ENCODE measurements at regions of chr7 and their contacts with region 1.

Region 1: GRCh38 chr7:2555121-2556052 is at the start of gene BRAT1:
- DNase-seq: peak; percentile 90 to 98 (median 96)
- ATAC-seq: peak; percentile 93
- H3K4me3 ChIP-seq: peak within 1 kb of the TSS; percentile 93
- H3K4me3 Mint-ChIP-seq: peak within 1 kb of the TSS; percentile 86
- H3K27ac ChIP-seq: peak within 1 kb of the TSS; percentile 98 to 99
- H3K27ac Mint-ChIP-seq: peak within 1 kb of the TSS; percentile 90
- H3K4me1 ChIP-seq: peaks cover 37% of the 10 kb centered on the region
- H3K4me1 Mint-ChIP-seq: peaks cover 47% of the 10 kb centered on the region
- H3K27me3 ChIP-seq: no peaks in the 10 kb centered on the region
- H3K27me3 Mint-ChIP-seq: no peaks in the 10 kb centered on the region
- CTCF ChIP-seq: peak; percentile 24
- total RNA-seq, gene BRAT1: 18.9 to 20.6 TPM

Region 2: GRCh38 chr7:1646957-1647891 is 908.2 kb before region 1 on chr7:
- CTCF ChIA-PET with region 1: no interaction called
- POLR2A ChIA-PET with region 1: no interaction called
- intact Hi-C with region 1: no loop called
- DNase-seq: no peak
- ATAC-seq: no peak
- H3K4me3 ChIP-seq: no peak overlapping the region
- H3K4me3 Mint-ChIP-seq: no peak overlapping the region
- H3K27ac ChIP-seq: no peak overlapping the region
- H3K27ac Mint-ChIP-seq: no peak overlapping the region
- H3K4me1 ChIP-seq: no peaks in the 10 kb centered on the region
- H3K4me1 Mint-ChIP-seq: no peaks in the 10 kb centered on the region
- H3K27me3 ChIP-seq: no peaks in the 10 kb centered on the region
- H3K27me3 Mint-ChIP-seq: peaks cover 21% of the 10 kb centered on the region
- CTCF ChIP-seq: no peak

Region 3: GRCh38 chr7:2403014-2403717 is 152.2 kb before region 1 on chr7 and contains the start of gene CHST12:
- CTCF ChIA-PET with region 1: no interaction called
- POLR2A ChIA-PET with region 1: no interaction called
- intact Hi-C with region 1: loop called (anchors 1 kb)
- DNase-seq: peak; percentile 87 to 99 (median 94)
- ATAC-seq: peak; percentile 78
- H3K4me3 ChIP-seq: peak within 1 kb of the TSS; percentile 84
- H3K4me3 Mint-ChIP-seq: peak within 1 kb of the TSS; percentile 84
- H3K27ac ChIP-seq: peak within 1 kb of the TSS; percentile 49 to 66
- H3K27ac Mint-ChIP-seq: peak within 1 kb of the TSS; percentile 88
- H3K4me1 ChIP-seq: peaks cover 53% of the 10 kb centered on the region
- H3K4me1 Mint-ChIP-seq: peaks cover 50% of the 10 kb centered on the region
- H3K27me3 ChIP-seq: no peaks in the 10 kb centered on the region
- H3K27me3 Mint-ChIP-seq: no peaks in the 10 kb centered on the region
- CTCF ChIP-seq: no peak
- total RNA-seq, gene CHST12: 10.3 to 11.7 TPM

Region 4: DNA sequence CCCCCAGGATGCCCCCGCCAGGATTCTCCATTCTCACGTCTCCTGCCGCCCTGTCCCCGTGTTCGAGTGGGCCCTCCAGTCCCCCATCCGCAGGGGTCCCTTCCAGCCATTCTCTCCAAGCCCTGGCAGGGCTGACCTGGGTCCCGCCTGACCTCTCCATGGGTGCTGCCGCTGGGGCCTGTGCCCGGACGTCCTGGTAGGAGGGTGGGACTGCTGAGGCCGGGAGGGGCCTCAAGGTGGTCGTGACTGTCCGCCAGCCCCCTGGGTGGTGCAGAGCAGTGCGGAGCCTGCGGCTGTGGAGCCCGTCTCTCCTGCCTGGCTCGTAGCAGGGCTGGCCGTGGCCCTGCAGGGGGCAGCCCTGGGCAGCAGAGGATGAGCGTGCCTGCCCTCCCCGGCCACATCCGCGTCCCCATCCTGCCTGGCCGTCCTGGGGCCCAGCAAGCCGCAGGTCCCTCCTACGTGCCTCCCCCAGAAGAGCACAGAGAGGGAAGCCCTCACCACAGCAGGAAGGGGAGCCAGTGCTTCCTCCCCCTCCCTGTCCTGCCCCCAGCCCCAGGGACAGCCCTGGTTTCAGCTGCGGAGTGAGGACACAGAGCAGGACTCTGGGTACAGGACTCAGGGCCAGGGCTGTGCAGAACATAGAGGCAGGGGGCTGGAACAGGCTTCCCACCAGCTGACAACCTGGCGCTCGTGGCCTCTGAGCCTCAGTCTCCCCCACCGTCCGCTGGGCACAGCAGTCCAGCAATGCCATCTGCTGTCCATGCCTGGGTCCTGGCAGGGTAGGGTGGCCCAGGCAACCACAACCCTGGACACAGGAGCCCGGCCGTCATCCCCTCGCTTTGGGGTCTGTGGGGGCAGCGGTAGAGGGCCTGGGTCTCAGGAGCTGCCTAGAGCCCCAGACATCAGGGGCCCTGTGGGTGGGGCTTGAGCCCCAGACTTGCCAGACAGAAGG is 77.7 kb before region 1 on chr7:
- CTCF ChIA-PET with region 1: no interaction called
- POLR2A ChIA-PET with region 1: no interaction called
- intact Hi-C with region 1: loop called (anchors 1 to 5 kb)
- DNase-seq: peak; percentile 30 to 84 (median 63)
- ATAC-seq: peak; percentile 94
- H3K4me3 ChIP-seq: no peak overlapping the region
- H3K4me3 Mint-ChIP-seq: no peak overlapping the region
- H3K27ac ChIP-seq: no peak overlapping the region
- H3K27ac Mint-ChIP-seq: no peak overlapping the region
- H3K4me1 ChIP-seq: peaks cover 15% of the 10 kb centered on the region
- H3K4me1 Mint-ChIP-seq: no peaks in the 10 kb centered on the region
- H3K27me3 ChIP-seq: no peaks in the 10 kb centered on the region
- H3K27me3 Mint-ChIP-seq: no peaks in the 10 kb centered on the region
- CTCF ChIP-seq: peak; percentile 52

Region 5: DNA sequence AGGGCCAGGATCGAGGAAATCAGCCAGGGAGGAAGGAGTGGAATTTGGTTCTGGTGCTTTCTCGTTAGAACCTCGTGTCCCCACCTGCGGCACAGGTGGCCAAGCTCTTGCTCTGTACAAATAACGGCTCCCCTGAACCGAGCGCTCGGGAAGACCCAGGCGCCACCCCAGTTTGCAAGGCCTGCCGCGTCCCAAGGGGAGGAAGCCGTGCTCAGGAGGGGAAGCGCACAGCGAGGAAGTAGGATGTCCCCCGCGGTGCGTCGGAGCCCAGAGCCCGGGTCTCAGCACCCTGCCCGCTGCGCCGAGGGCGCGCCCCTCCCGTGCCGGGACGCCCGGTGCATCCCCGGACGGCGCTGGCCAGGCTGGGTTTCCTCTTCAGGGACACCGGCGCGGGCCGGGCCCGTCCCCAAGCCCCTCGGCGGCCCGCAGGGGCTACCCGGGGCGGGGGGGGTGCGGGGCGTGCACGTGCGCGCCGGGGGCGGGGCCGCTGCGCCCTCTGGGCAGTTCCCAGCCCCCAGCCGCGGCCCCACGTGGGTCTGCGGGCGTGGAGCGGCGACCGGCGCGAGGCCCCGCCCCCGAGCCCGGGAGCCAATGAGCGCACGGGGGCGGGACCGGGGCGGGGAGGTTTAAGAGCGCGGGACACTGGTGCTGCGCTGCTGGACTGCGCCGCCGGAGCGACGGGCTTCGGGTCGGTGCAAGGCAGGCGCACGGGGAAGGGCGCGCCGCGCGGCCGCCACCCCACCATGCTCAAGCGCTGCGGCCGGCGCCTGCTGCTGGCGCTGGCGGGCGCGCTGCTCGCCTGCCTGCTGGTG is 36.1 kb before region 1 on chr7 and contains the start of gene LFNG:
- CTCF ChIA-PET with region 1: no interaction called
- POLR2A ChIA-PET with region 1: interaction called, 5 read pairs
- intact Hi-C with region 1: loop called (anchors 1 to 2 kb)
- DNase-seq: peak; percentile 58 to 94 (median 85)
- ATAC-seq: peak; percentile 63
- H3K4me3 ChIP-seq: peak within 1 kb of the TSS; percentile 98 to 100
- H3K4me3 Mint-ChIP-seq: peak within 1 kb of the TSS; percentile 96
- H3K27ac ChIP-seq: peak within 1 kb of the TSS; percentile 53 to 63
- H3K27ac Mint-ChIP-seq: peak within 1 kb of the TSS; percentile 94
- H3K4me1 ChIP-seq: peaks cover 37% of the 10 kb centered on the region
- H3K4me1 Mint-ChIP-seq: peaks cover 44% of the 10 kb centered on the region
- H3K27me3 ChIP-seq: no peaks in the 10 kb centered on the region
- H3K27me3 Mint-ChIP-seq: no peaks in the 10 kb centered on the region
- CTCF ChIP-seq: no peak
- total RNA-seq, gene LFNG: 137 to 140 TPM

Region 6: DNA sequence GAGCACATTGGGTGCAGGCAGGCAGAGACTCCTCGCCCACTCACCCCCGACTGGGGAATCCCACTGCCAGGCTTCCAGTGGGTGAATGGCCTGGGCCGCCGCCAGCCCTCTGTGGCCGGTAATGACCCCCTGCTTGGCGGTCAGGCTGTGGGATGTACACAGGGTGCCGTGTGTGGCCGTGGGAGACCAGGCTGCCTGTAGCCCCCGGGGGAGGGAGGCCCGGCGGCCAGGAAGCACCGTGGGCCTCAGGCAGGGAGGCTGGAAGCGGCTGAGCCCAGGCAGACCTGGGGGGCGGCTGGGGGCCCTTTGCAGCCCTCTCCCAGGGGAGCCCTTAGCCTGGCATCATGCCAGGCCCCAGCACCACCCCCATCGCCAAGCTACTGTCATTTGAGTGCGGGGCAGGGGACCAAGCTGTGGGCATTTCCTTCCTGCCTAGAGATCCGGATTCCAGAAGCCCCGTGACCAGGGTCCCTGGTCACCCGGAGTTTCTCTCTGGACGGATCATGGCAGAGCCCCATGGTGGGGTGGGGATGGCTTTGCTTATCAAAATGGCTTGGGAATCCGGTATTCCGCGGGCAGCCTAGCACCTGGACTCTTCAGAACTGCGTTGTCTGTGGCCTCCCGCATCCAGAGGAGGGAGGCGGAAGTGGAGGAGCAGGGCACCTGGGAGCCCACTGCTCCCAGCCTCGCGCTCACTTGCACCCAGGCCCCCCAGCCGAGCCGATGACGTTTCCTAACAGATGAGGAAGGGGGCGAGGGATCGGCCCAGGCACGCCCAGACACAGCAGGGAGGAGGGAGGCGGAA is 77.5 kb after region 1 on chr7:
- CTCF ChIA-PET with region 1: no interaction called
- POLR2A ChIA-PET with region 1: no interaction called
- intact Hi-C with region 1: loop called in 1 of 2 experiments (anchors 1 kb)
- DNase-seq: peak in 7 of 9 experiments; percentile 15 to 60 (median 48)
- ATAC-seq: peak; percentile 4
- H3K4me3 ChIP-seq: peak overlapping the region; percentile 69 to 79
- H3K4me3 Mint-ChIP-seq: peak overlapping the region; percentile 88
- H3K27ac ChIP-seq: peak overlapping the region; percentile 43 to 53
- H3K27ac Mint-ChIP-seq: peak overlapping the region; percentile 77
- H3K4me1 ChIP-seq: peaks cover 25% of the 10 kb centered on the region
- H3K4me1 Mint-ChIP-seq: peaks cover 14% of the 10 kb centered on the region
- H3K27me3 ChIP-seq: no peaks in the 10 kb centered on the region
- H3K27me3 Mint-ChIP-seq: no peaks in the 10 kb centered on the region
- CTCF ChIP-seq: no peak

Region 7: GRCh38 chr7:2831015-2831414 is 275.6 kb after region 1 on chr7:
- CTCF ChIA-PET with region 1: no interaction called
- POLR2A ChIA-PET with region 1: no interaction called
- intact Hi-C with region 1: no loop called
- DNase-seq: no peak
- ATAC-seq: no peak
- H3K4me3 ChIP-seq: no peak overlapping the region
- H3K4me3 Mint-ChIP-seq: no peak overlapping the region
- H3K27ac ChIP-seq: no peak overlapping the region
- H3K27ac Mint-ChIP-seq: no peak overlapping the region
- H3K4me1 ChIP-seq: no peaks in the 10 kb centered on the region
- H3K4me1 Mint-ChIP-seq: peaks cover 13% of the 10 kb centered on the region
- H3K27me3 ChIP-seq: no peaks in the 10 kb centered on the region
- H3K27me3 Mint-ChIP-seq: no peaks in the 10 kb centered on the region
- CTCF ChIP-seq: no peak

Region 8: GRCh38 chr7:2844165-2844898 is 288.9 kb after region 1 on chr7 and contains the start of gene GNA12:
- CTCF ChIA-PET with region 1: no interaction called
- POLR2A ChIA-PET with region 1: no interaction called
- intact Hi-C with region 1: loop called in 1 of 2 experiments (anchors 5 kb)
- DNase-seq: peak; percentile 96 to 99 (median 98)
- ATAC-seq: peak; percentile 94
- H3K4me3 ChIP-seq: peak within 1 kb of the TSS; percentile 51 to 58
- H3K4me3 Mint-ChIP-seq: peak within 1 kb of the TSS; percentile 93
- H3K27ac ChIP-seq: peak within 1 kb of the TSS in 1 of 2 experiments; percentile 22
- H3K27ac Mint-ChIP-seq: peak within 1 kb of the TSS; percentile 81
- H3K4me1 ChIP-seq: peaks cover 21% of the 10 kb centered on the region
- H3K4me1 Mint-ChIP-seq: peaks cover 44% of the 10 kb centered on the region
- H3K27me3 ChIP-seq: no peaks in the 10 kb centered on the region
- H3K27me3 Mint-ChIP-seq: no peaks in the 10 kb centered on the region
- CTCF ChIP-seq: no peak
- total RNA-seq, gene GNA12: 17.0 to 17.7 TPM